GM12878 (cell line): ENCODE measurements at regions of chr12 and their contacts with region 1.

Region 1: GRCh38 chr12:121334513-121335343 is 17.5 kb downstream of the ANAPC5 start:
- DNase-seq: peak; percentile 26
- ATAC-seq: peak; percentile 95
- H3K4me3 ChIP-seq: no peak overlapping the region
- H3K27ac ChIP-seq: no peak overlapping the region
- H3K4me1 ChIP-seq: no peaks in the 10 kb centered on the region
- H3K27me3 ChIP-seq: no peaks in the 10 kb centered on the region
- CTCF ChIP-seq: peak; percentile 76 to 82 (median 82)
- EP300 ChIP-seq: no peak
- POLR2A ChIP-seq: no peak
- RAD21 ChIP-seq: peak; percentile 75

Region 2: DNA sequence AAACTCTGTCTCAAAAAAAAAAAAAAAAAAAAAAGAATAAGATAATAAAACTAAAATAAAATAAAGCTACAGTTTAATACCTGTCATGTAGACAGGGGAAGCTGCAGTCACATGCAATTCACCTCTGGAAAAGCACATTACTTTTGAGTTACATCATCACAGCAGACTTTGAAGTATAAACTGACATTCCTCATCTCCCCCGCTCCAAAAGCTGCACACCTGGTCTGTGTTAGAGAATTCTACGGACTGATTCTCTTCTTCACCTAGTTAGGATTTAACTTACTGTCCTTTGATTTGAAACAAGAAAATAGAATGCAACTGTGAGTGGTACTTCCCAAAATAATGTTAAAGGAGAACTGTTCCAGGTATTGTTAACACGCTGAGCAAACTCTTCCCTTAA is 455.6 kb before region 1 on chr12:
- CTCF ChIA-PET with region 1: no interaction called
- POLR2A ChIA-PET with region 1: no interaction called
- RAD21 ChIA-PET with region 1: no interaction called
- SMC1A ChIA-PET with region 1: no interaction called
- in situ Hi-C with region 1: no loop called
- intact Hi-C with region 1: no loop called
- DNase-seq: no peak
- ATAC-seq: no peak
- H3K4me3 ChIP-seq: no peak overlapping the region
- H3K27ac ChIP-seq: no peak overlapping the region
- H3K4me1 ChIP-seq: no peaks in the 10 kb centered on the region
- H3K27me3 ChIP-seq: no peaks in the 10 kb centered on the region
- CTCF ChIP-seq: no peak
- EP300 ChIP-seq: no peak
- POLR2A ChIP-seq: no peak
- RAD21 ChIP-seq: no peak

Region 3: GRCh38 chr12:120961604-120962531 is 372.9 kb before region 1 on chr12:
- CTCF ChIA-PET with region 1: no interaction called
- POLR2A ChIA-PET with region 1: no interaction called
- RAD21 ChIA-PET with region 1: no interaction called
- SMC1A ChIA-PET with region 1: no interaction called
- in situ Hi-C with region 1: no loop called
- intact Hi-C with region 1: no loop called
- DNase-seq: no peak
- ATAC-seq: no peak
- H3K4me3 ChIP-seq: no peak overlapping the region
- H3K27ac ChIP-seq: no peak overlapping the region
- H3K4me1 ChIP-seq: peaks cover 10% of the 10 kb centered on the region
- H3K27me3 ChIP-seq: no peaks in the 10 kb centered on the region
- CTCF ChIP-seq: no peak
- EP300 ChIP-seq: no peak
- POLR2A ChIP-seq: no peak
- RAD21 ChIP-seq: no peak

Region 4: GRCh38 chr12:121318121-121318520 is 16.6 kb before region 1 on chr12:
- CTCF ChIA-PET with region 1: interaction called, 26 read pairs
- POLR2A ChIA-PET with region 1: no interaction called
- RAD21 ChIA-PET with region 1: no interaction called
- SMC1A ChIA-PET with region 1: interaction called, 5 read pairs
- in situ Hi-C with region 1: no loop called
- intact Hi-C with region 1: no loop called
- DNase-seq: no peak
- ATAC-seq: no peak
- H3K4me3 ChIP-seq: no peak overlapping the region
- H3K27ac ChIP-seq: no peak overlapping the region
- H3K4me1 ChIP-seq: no peaks in the 10 kb centered on the region
- H3K27me3 ChIP-seq: no peaks in the 10 kb centered on the region
- CTCF ChIP-seq: no peak
- EP300 ChIP-seq: no peak
- POLR2A ChIP-seq: no peak
- RAD21 ChIP-seq: no peak

Region 5: GRCh38 chr12:121345151-121345815 is 10.6 kb after region 1 on chr12:
- CTCF ChIA-PET with region 1: interaction called, 51 read pairs
- POLR2A ChIA-PET with region 1: interaction called, 4 read pairs
- RAD21 ChIA-PET with region 1: no interaction called
- SMC1A ChIA-PET with region 1: interaction called, 15 read pairs
- in situ Hi-C with region 1: no loop called
- intact Hi-C with region 1: no loop called
- DNase-seq: no peak
- ATAC-seq: peak; percentile 34
- H3K4me3 ChIP-seq: no peak overlapping the region
- H3K27ac ChIP-seq: no peak overlapping the region
- H3K4me1 ChIP-seq: no peaks in the 10 kb centered on the region
- H3K27me3 ChIP-seq: no peaks in the 10 kb centered on the region
- CTCF ChIP-seq: no peak
- EP300 ChIP-seq: no peak
- POLR2A ChIP-seq: no peak
- RAD21 ChIP-seq: no peak

Region 6: GRCh38 chr12:121358073-121358472 is 23.3 kb after region 1 on chr12:
- CTCF ChIA-PET with region 1: interaction called, 12 read pairs
- POLR2A ChIA-PET with region 1: no interaction called
- RAD21 ChIA-PET with region 1: no interaction called
- SMC1A ChIA-PET with region 1: interaction called, 3 read pairs
- in situ Hi-C with region 1: no loop called
- intact Hi-C with region 1: no loop called
- DNase-seq: no peak
- ATAC-seq: no peak
- H3K4me3 ChIP-seq: no peak overlapping the region
- H3K27ac ChIP-seq: no peak overlapping the region
- H3K4me1 ChIP-seq: no peaks in the 10 kb centered on the region
- H3K27me3 ChIP-seq: no peaks in the 10 kb centered on the region
- CTCF ChIP-seq: no peak
- EP300 ChIP-seq: no peak
- POLR2A ChIP-seq: no peak
- RAD21 ChIP-seq: no peak

Region 7: DNA sequence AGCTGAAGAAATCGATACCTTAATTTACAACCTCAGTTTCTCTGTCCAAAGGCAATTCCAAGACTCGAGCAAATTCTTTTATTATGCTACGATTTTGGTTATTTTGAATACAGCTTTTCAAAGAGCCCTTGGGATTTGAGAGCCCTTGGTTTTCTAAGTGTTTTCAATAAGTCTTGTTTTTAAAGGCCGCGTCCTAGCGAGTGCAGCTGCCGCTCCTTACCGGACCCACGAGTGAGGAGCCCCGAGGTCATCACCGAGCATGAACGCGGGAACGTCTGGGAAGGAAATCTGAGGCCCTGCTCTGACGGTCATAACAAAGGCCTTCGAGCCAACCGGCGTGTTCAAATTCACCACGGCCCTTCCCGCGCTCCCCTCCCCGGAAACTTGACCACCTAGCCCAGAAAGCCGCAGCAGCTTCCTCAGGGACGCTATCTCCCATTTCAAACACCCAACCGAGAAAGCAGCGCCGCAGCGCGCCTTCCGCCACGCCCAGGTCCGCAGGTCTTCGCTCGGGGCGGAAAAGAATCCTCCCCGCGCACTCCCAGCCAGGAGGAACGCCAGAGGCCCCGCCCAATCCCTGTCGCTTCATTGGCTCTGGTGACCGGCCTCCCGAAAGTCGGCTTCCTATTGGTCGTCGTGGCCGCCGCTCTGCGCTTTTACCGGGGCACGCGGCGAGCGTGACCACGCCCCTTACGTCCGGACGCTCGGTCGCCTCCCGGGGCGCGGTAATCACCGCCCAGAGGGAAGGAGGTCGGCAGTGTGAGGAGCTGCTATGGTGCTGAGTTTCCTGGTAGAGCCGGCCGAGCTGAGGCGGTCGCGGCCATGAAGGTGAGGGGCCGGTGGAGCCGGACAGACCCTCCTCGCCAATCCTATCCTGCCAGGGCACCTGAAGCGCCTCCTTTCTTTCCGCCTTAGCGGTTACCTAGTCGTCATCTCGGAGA is 64.9 kb after region 1 on chr12 and contains the start of gene RNF34:
- CTCF ChIA-PET with region 1: interaction called, 21 read pairs
- POLR2A ChIA-PET with region 1: interaction called, 3 read pairs
- RAD21 ChIA-PET with region 1: interaction called, 7 read pairs
- SMC1A ChIA-PET with region 1: interaction called, 3 read pairs
- in situ Hi-C with region 1: no loop called
- intact Hi-C with region 1: loop called (anchors 5 kb)
- DNase-seq: peak; percentile 88
- ATAC-seq: peak; percentile 94
- H3K4me3 ChIP-seq: peak within 1 kb of the TSS; percentile 95
- H3K27ac ChIP-seq: peak within 1 kb of the TSS; percentile 93
- H3K4me1 ChIP-seq: no peaks in the 10 kb centered on the region; the same call in 1 of the 2 replicates
- H3K27me3 ChIP-seq: no peaks in the 10 kb centered on the region
- CTCF ChIP-seq: no peak
- EP300 ChIP-seq: no peak
- POLR2A ChIP-seq: peak; percentile 99
- RAD21 ChIP-seq: no peak
- polyA plus RNA-seq, gene RNF34: 111 to 121 TPM

Region 8: DNA sequence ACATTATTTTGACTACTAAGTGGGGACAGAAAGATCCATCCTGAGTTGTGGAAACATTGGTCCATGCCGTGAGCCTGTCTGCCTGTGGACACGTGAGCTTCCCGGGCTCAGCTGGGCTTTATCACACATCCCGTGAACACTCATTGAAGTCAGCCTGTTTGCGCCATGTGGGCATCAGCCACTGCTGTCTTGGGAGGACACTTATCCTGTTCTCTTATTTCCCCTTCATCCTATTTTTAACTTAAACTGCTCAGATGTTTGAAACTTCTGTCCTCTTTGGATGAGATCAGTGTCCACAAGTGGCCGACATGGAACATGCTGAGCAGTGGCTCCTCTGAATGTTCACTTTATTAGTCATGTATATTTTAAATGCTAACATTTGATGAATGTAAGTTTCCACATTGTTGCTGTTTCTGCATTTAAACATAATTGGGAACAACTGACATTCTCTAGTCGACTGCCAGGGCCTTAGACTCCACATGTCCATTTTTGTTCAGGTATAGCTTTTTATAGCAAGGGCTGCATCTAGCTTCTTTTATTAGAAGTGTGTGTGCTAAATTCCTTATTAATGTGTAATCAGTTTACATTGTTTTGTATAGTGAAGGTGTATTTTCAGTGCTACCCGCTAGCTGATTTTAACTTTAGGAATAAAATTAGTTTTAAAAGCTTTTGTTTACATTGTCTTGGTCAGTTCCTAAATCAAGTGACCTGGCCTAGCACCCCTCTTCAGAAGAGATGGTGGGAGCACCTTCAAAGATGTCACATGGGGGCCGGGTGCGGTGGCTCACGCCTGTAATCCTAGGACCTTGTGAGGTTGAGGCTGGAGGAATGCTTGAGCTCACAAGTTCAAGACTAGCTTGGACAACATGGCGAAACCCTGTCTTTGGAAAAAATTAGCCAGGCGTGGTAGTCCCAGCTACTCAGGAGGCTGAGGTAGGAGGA is 89.2 kb after region 1 on chr12:
- CTCF ChIA-PET with region 1: interaction called, 15 read pairs
- POLR2A ChIA-PET with region 1: no interaction called
- RAD21 ChIA-PET with region 1: interaction called, 3 read pairs
- SMC1A ChIA-PET with region 1: interaction called, 19 read pairs
- in situ Hi-C with region 1: loop called (anchors 25 kb)
- intact Hi-C with region 1: no loop called
- DNase-seq: no peak
- ATAC-seq: no peak
- H3K4me3 ChIP-seq: no peak overlapping the region
- H3K27ac ChIP-seq: 0 out of 2 replicates have a peak overlapping the region, but pooled peaks have one; percentile 6
- H3K4me1 ChIP-seq: peaks cover 22% of the 10 kb centered on the region
- H3K27me3 ChIP-seq: no peaks in the 10 kb centered on the region
- CTCF ChIP-seq: no peak
- EP300 ChIP-seq: no peak
- POLR2A ChIP-seq: no peak; the same call in 1 of the 2 replicates
- RAD21 ChIP-seq: no peak

Region 9: GRCh38 chr12:121678716-121679580 is 344.2 kb after region 1 on chr12:
- CTCF ChIA-PET with region 1: interaction called, 17 read pairs
- POLR2A ChIA-PET with region 1: no interaction called
- RAD21 ChIA-PET with region 1: no interaction called
- SMC1A ChIA-PET with region 1: no interaction called
- in situ Hi-C with region 1: no loop called
- intact Hi-C with region 1: loop called (anchors 5 kb)
- DNase-seq: no peak
- ATAC-seq: no peak
- H3K4me3 ChIP-seq: no peak overlapping the region
- H3K27ac ChIP-seq: no peak overlapping the region
- H3K4me1 ChIP-seq: no peaks in the 10 kb centered on the region
- H3K27me3 ChIP-seq: no peaks in the 10 kb centered on the region
- CTCF ChIP-seq: no peak
- EP300 ChIP-seq: no peak
- POLR2A ChIP-seq: no peak
- RAD21 ChIP-seq: no peak